ENCODE measurements at regions of chr2 and their contacts with region 1.

Region 1: GRCh38 chr2:224004105-224004695 is 34.9 kb downstream of the SERPINE2 start:
- DNase-seq: no peak
- ATAC-seq: no peak
- H3K4me3 Mint-ChIP-seq: no peak overlapping the region
- H3K27ac Mint-ChIP-seq: no peak overlapping the region
- H3K4me1 Mint-ChIP-seq: no peaks in the 10 kb centered on the region
- H3K27me3 Mint-ChIP-seq: no peaks in the 10 kb centered on the region
- CTCF ChIP-seq: no peak

Region 2: DNA sequence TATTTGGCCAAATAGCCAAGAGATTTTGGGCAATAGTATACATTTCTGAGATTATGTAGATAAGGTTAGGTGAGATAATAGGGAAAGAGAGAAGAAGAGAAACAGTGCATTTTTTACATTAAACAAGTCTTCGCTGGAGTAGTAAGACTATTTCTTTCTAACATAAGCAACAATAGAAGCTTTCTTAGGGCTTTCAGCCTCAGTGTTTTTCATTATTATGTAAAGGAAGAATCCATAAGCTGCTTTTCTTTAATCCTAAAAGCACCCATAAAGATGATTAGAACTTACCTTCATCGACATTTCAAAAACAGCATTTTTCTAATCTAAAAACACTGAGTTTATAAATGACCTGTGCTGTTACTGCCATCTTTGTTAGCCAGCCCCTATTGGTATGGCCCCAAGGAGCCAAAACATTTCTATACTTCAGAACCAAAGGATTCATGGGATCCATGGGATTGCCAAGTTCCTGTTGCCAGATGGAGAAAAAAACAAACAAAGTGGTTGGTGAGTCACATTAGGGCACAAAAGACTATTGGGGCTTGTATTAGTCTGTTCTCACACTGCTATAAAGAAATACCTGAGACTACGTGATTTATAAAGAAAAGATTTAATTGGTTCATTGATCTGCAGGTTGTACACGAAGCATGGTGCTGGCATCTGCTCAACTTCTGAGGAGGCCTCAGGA is 490.3 kb before region 1 on chr2:
- CTCF ChIA-PET with region 1: no interaction called
- POLR2A ChIA-PET with region 1: no interaction called
- intact Hi-C with region 1: no loop called
- DNase-seq: no peak
- ATAC-seq: no peak
- H3K4me3 Mint-ChIP-seq: no peak overlapping the region
- H3K27ac Mint-ChIP-seq: no peak overlapping the region
- H3K4me1 Mint-ChIP-seq: no peaks in the 10 kb centered on the region
- H3K27me3 Mint-ChIP-seq: peaks cover 5% of the 10 kb centered on the region
- CTCF ChIP-seq: no peak

Region 3: GRCh38 chr2:223976635-223977226 is 27.5 kb before region 1 on chr2:
- CTCF ChIA-PET with region 1: no interaction called
- POLR2A ChIA-PET with region 1: no interaction called
- intact Hi-C with region 1: no loop called
- DNase-seq: no peak
- ATAC-seq: no peak
- H3K4me3 Mint-ChIP-seq: no peak overlapping the region
- H3K27ac Mint-ChIP-seq: no peak overlapping the region
- H3K4me1 Mint-ChIP-seq: no peaks in the 10 kb centered on the region
- H3K27me3 Mint-ChIP-seq: no peaks in the 10 kb centered on the region
- CTCF ChIP-seq: no peak

Region 4: DNA sequence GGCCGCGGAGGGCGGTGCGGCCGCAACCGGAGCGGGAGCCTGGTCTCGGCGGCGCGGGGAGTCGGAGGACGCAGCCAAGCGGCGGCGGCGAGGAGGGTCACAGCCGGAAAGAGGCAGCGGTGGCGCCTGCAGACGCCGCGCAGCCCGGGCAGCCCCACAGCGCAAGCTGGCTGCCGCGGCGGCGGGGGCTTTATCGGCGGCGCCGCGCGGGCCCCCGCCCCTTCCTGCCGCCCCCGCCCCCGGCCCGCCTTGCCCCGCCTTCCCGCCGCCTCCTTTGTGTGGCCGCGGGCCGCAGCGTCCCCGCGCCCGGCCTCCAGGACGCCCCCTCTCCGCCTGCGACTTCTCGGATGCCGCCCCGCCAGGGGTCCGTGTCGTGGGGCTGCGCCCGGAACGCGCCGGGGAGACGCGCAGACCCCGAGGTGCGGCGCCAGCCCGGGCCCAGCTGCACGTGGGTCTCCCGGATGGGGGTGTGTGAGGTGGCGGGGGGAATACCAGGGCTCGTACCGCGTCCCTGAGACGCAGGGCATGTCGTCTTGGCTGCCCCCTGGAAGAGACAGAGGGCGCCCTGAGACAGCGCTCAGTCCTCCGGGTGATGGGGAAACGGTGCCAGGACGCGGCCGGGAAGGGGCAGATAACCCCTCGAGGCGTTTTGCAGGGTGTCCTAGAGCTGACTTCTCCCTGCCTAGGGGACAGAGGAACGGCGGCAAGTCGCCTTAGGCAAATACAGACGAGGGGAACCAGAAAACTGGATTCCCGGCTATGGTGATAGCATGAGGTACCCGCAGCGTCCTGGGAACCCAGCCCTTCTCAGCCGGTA is 35.1 kb after region 1 on chr2 and contains the start of gene SERPINE2:
- CTCF ChIA-PET with region 1: no interaction called
- POLR2A ChIA-PET with region 1: no interaction called
- intact Hi-C with region 1: loop called (anchors 5 kb)
- DNase-seq: peak; percentile 37
- ATAC-seq: peak; percentile 66
- H3K4me3 Mint-ChIP-seq: peak within 1 kb of the TSS; percentile 83
- H3K27ac Mint-ChIP-seq: no peak within 1 kb of the TSS
- H3K4me1 Mint-ChIP-seq: peaks cover 14% of the 10 kb centered on the region
- H3K27me3 Mint-ChIP-seq: peaks cover 47% of the 10 kb centered on the region
- CTCF ChIP-seq: no peak
- total RNA-seq, gene SERPINE2: 0.98 and 1.1 TPM in 2 replicates